Activated CD4-positive, alpha-beta T cell treated with anti-CD3 and anti-CD28 coated beads, Interleukin-2, amount 10 ng/mL, durations not matched to agents 24 days and 14 days (primary cell): ENCODE measurements at regions of chr1 and their contacts with region 1.

Region 1: DNA sequence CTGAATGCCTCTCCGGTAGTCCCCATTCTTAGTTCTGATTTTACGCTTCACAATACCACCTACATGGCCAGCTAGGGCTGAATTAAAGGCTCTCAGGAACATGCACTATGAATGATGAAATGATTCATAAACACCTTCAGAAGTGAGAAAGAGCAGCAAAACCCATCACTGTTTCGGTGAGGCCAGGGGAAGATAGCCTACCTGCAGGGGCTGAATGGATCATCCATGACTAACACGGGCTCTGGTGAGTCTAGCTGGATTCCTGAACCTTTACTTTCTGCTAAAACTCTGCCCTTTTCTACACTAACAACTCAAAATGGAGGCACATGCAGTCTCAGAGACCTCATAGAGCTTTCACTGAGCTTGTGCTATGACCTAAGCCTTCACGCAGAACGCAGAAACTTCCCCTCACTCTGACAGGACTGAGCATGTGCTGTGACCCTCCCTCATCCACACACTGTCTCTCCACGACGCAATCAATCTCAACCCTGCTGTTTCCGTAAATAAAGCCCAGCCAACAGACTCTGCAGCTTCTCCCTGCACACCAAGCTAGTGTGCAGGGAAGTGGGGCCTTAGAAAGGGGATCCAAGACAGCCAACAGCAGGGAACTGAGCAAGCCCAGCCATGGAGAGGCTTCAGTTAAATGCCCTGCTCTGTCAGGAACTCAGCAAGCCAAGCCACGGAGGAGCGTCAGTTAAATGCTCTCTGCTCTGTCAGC is 207.8 kb downstream of the SLC45A1 start:
- DNase-seq: peak; percentile 92
- H3K4me3 Mint-ChIP-seq: no peak overlapping the region
- H3K27ac Mint-ChIP-seq: no peak overlapping the region
- H3K4me1 Mint-ChIP-seq: peaks cover 38% of the 10 kb centered on the region
- H3K27me3 Mint-ChIP-seq: no peaks in the 10 kb centered on the region

Region 2: DNA sequence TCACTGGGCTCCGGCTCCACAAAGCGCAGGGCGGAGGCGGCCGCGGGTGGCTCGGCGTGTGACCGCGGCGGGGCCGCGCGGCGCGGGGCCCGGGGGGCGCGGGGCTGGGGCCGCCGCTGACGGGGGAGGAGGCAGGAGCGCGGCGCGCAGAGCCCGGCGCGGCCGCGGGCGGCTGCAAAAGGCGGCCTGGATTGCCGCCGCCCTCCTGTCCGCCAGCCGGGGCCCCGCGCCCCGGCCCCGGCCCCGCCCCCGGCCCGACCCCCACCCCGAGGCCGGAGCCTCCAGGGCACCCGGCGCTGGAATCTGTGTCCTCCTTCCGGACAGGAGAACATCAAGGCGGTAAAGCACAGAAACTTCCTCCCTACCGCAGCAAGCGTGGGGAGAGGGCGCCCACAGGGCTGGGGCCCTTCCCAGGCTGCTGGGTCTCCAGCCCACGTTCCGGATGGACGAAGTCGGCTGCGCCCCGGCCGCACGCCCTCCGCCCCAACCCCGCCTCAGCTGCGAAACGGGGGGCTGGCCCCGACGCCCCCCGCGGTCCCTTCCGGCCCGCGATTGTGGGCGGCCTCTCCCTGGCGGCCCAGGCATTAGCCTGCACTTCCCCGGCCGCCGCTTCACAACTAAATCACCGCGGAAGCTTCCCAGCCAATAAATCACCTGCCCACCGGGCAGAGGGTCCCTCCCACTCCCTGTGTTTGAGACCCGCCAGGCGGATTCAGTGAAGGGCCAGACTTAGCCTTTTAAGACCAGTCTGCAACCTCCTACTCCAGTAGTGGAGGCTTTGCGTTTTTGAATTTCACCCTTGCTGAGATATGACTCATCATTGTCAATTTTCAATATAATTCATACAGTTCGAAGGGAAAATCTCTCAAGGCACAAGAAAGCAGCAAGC is 101.8 kb before region 1 on chr1:
- intact Hi-C with region 1: loop called (anchors 1 kb)
- DNase-seq: peak; percentile 83
- H3K4me3 Mint-ChIP-seq: peak overlapping the region; percentile 86
- H3K27ac Mint-ChIP-seq: peak overlapping the region; percentile 90
- H3K4me1 Mint-ChIP-seq: peaks cover 40% of the 10 kb centered on the region
- H3K27me3 Mint-ChIP-seq: no peaks in the 10 kb centered on the region

Region 3: GRCh38 chr1:8497210-8497801 is 28.4 kb before region 1 on chr1:
- intact Hi-C with region 1: loop called (anchors 5 kb)
- DNase-seq: no peak
- H3K4me3 Mint-ChIP-seq: no peak overlapping the region
- H3K27ac Mint-ChIP-seq: peak overlapping the region; percentile 34
- H3K4me1 Mint-ChIP-seq: peaks cover 29% of the 10 kb centered on the region
- H3K27me3 Mint-ChIP-seq: no peaks in the 10 kb centered on the region

Region 4: GRCh38 chr1:8540261-8540941 is 14.7 kb after region 1 on chr1:
- intact Hi-C with region 1: loop called (anchors 1 kb)
- DNase-seq: no peak
- H3K4me3 Mint-ChIP-seq: peak overlapping the region; percentile 67
- H3K27ac Mint-ChIP-seq: peak overlapping the region; percentile 92
- H3K4me1 Mint-ChIP-seq: peaks cover 41% of the 10 kb centered on the region
- H3K27me3 Mint-ChIP-seq: no peaks in the 10 kb centered on the region

Region 5: DNA sequence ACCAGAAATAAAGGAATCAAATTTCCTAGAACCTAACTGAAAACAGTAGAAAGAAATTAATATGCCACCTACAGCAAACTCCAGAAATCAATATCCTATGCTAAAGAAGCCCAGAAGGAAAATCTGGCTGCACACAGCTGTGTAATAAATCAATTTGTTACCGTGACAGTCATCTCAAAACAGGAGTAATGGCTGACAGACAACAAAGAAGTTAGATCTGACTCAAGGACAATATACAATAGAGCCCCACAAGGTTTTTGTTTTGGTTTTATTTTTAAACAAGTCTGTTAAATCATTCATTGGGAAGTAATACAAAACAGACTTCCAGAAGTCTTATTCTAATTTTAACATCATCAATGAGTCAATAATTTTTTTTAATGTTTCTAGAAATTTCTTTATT is 123.3 kb after region 1 on chr1:
- intact Hi-C with region 1: loop called (anchors 1 kb)
- DNase-seq: no peak
- H3K4me3 Mint-ChIP-seq: peak overlapping the region; percentile 35
- H3K27ac Mint-ChIP-seq: peak overlapping the region; percentile 62
- H3K4me1 Mint-ChIP-seq: peaks cover 45% of the 10 kb centered on the region
- H3K27me3 Mint-ChIP-seq: no peaks in the 10 kb centered on the region

Region 6: GRCh38 chr1:8763888-8764287 is 238.2 kb after region 1 on chr1:
- intact Hi-C with region 1: no loop called
- DNase-seq: no peak
- H3K4me3 Mint-ChIP-seq: no peak overlapping the region
- H3K27ac Mint-ChIP-seq: no peak overlapping the region
- H3K4me1 Mint-ChIP-seq: peaks cover 6% of the 10 kb centered on the region
- H3K27me3 Mint-ChIP-seq: no peaks in the 10 kb centered on the region